Panc1 (cell line): ENCODE measurements at regions of chrX and their contacts with region 1.

Region 1: DNA sequence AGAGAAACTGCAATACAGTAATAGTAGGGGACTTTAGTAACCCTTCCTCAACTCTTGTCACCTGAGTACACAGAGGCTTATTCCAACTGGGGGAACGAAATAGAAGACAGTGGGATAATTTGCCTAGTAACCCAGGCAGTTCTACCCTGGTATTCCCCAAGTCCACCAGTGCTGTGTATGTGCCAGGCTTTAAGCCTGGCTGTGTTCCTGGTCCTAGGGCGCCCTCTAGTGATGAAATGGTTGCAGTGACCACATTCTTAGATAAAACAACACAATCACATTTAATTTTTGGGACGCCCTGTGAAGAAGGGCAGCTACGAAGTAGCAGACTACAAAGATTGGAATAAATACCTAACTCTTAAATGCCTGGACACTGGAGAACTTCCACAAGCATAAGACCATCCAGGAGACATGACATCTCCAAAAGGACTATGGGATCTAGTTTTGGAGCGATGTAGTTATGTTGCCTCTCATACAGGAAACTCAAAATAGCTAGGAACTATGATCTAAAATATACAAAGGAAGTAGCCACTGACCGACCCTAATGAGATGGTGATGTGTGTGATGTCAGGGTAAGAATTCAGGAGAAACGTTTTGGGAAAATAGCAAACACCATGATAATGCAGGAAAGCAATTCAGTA is 288.5 kb upstream of the ZCCHC13 start:
- DNase-seq: peak; percentile 53
- ATAC-seq: peak; percentile 96
- H3K4me3 ChIP-seq: no peak overlapping the region
- H3K27ac ChIP-seq: no peak overlapping the region
- H3K4me1 ChIP-seq: no peaks in the 10 kb centered on the region
- H3K27me3 ChIP-seq: no peaks in the 10 kb centered on the region
- CTCF ChIP-seq: peak; percentile 85

Region 2: DNA sequence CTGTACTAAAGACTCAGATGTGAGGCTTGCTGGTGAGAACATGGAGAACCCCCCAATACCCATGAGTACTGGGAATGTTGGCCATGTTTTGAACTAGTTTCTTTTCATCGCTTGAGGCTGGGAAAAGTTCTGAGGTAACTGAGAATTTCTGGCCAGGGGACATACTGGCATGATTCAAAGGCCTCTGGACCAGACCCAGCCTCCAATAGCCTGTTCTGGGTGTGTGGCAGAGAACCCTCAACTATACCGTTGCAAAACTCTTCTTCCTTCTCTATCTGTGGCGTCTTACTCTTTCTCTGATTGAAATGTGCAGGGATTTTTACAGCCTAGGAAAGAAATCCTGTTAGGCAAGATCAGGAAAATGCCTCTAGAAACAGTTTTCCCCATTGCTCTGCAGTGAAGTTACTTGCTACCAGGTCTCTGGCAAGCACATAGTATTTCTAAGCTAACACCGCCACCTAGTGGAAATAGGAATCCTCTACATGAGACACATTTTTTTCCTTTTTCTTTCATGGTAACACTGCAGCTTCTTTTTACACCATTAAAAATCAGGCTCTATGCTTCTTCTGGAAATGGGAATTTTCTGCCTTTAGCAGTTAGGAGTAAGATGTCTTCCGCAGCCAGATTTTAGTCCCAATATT is 117.8 kb after region 1 on chrX:
- CTCF ChIA-PET with region 1: no interaction called
- POLR2A ChIA-PET with region 1: no interaction called
- in situ Hi-C with region 1: no loop called
- intact Hi-C with region 1: loop called (anchors 5 kb)
- DNase-seq: peak; percentile 27
- ATAC-seq: peak; percentile 96
- H3K4me3 ChIP-seq: no peak overlapping the region
- H3K27ac ChIP-seq: peak overlapping the region; percentile 68; the same call in 1 of the 2 replicates
- H3K4me1 ChIP-seq: peaks cover 11% of the 10 kb centered on the region
- H3K27me3 ChIP-seq: no peaks in the 10 kb centered on the region
- CTCF ChIP-seq: peak; percentile 66